ENCODE measurements at regions of chr1 and their contacts with region 1.

Region 1: DNA sequence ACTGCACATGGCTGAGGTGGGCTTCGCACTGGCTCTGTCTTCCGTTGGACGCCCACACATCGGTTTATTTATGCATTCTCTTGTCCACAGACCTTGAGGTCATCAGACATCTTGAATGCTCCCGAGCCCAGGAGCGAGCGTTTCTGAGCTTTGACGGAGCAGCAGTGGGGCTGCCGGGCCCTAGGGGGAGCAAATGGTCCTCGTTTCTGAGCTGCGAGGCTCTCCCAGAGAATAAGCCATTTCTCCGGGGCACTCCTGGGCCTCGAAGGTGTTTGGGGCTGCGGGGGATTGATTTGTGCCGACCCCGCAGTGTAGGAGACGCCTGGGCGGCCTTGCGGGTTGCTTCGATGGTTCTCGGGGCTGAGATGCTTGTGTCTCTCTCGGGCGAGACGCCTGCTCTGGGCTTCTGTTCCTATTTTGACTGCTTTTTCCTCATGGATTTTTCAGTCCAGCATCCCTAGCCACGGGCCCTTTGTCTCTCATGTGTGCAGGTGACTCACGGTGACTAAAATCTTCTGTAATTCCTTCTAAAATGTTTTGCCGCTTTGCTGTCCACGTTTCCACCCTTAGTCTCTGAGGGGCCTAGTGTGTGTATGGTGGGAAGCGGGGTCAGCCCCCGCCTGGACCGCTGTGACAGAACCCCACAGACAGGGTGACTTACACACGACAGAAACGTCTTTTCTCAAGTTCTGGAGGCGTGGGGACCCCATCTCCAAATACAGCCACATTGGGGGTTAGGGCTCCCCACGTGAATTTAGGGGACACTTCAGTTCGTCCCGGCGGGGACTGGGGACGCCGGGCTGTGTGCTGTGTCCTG is 62.1 kb downstream of the FAAP20 start:
- DNase-seq: peak; percentile 26
- ATAC-seq: 0 out of 3 replicates have a peak, but pooled peaks have one; percentile 12
- H3K4me3 ChIP-seq: no peak overlapping the region
- H3K27ac ChIP-seq: peak overlapping the region; percentile 19
- H3K4me1 ChIP-seq: peaks cover 54% of the 10 kb centered on the region
- H3K27me3 ChIP-seq: no peaks in the 10 kb centered on the region
- CTCF ChIP-seq: peak; percentile 70
- EP300 ChIP-seq: no peak
- POLR2A ChIP-seq: no peak
- RAD21 ChIP-seq: peak; percentile 64

Region 2: DNA sequence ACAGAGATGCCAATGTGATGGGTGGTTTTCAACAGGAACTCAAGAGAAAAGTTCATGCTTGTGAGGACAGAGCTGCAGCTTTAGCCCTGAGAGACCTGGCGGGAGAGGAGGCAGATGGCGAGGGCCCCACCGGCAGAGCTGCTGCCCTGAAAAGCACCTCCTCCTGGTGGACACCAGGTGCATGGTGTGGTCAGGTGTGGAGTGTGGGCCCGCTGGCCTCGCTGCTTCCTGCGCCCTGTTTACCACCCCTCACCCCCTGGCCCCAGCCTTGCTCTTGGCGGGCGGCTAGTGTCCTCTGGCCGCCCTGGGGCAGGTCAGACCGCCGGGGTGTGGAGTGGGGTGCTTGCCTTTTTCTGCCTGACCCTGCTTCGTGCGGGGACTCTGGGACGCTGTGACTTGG is 39.4 kb before region 1 on chr1:
- CTCF ChIA-PET with region 1: no interaction called
- POLR2A ChIA-PET with region 1: no interaction called
- in situ Hi-C with region 1: no loop called
- intact Hi-C with region 1: no loop called
- DNase-seq: no peak
- ATAC-seq: 0 out of 3 replicates have a peak, but pooled peaks have one; percentile 15
- H3K4me3 ChIP-seq: no peak overlapping the region
- H3K27ac ChIP-seq: no peak overlapping the region
- H3K4me1 ChIP-seq: peaks cover 13% of the 10 kb centered on the region; the same call in 1 of the 2 replicates
- H3K27me3 ChIP-seq: no peaks in the 10 kb centered on the region
- CTCF ChIP-seq: no peak
- EP300 ChIP-seq: no peak
- POLR2A ChIP-seq: no peak
- RAD21 ChIP-seq: no peak

Region 3: DNA sequence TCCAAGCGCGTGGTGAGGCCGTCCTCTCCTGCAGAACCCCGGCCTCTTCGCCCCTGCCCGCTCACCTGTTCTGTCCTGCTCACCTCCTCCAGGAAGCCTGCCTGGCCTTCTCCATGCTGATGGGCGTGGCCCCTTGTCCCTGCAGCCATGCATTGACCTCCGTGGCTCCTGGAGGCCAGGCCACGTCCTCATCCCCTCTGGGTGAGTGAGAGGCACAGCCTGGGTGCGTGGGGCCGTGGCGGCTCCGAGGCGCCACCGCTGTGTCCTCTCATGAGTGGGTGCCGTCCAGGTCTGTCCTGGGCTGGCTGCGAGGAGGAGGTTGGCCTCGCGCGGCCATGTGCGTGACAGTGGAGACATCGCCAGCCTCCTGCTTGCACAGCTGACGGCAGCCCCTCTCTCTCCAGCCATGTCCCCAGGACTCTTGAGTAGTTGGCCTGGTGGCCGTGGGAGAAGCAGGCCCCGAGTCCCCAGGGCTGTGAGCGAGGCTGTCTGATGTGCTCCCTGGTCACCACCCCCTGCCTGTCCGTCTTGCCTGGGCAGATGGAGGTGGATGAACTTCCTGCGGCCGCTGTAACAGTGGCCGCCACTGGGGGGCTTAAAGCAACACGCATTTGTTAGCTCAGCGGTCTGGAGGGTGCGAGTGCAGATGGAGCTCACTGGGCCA is 24.1 kb before region 1 on chr1:
- CTCF ChIA-PET with region 1: no interaction called
- POLR2A ChIA-PET with region 1: interaction called, 12 read pairs
- in situ Hi-C with region 1: loop called (anchors 5 kb)
- intact Hi-C with region 1: no loop called
- DNase-seq: peak; percentile 40
- ATAC-seq: peak; percentile 17
- H3K4me3 ChIP-seq: no peak overlapping the region
- H3K27ac ChIP-seq: no peak overlapping the region
- H3K4me1 ChIP-seq: peaks cover 26% of the 10 kb centered on the region
- H3K27me3 ChIP-seq: no peaks in the 10 kb centered on the region
- CTCF ChIP-seq: peak; percentile 68
- EP300 ChIP-seq: no peak
- POLR2A ChIP-seq: no peak
- RAD21 ChIP-seq: peak; percentile 68

Region 4: DNA sequence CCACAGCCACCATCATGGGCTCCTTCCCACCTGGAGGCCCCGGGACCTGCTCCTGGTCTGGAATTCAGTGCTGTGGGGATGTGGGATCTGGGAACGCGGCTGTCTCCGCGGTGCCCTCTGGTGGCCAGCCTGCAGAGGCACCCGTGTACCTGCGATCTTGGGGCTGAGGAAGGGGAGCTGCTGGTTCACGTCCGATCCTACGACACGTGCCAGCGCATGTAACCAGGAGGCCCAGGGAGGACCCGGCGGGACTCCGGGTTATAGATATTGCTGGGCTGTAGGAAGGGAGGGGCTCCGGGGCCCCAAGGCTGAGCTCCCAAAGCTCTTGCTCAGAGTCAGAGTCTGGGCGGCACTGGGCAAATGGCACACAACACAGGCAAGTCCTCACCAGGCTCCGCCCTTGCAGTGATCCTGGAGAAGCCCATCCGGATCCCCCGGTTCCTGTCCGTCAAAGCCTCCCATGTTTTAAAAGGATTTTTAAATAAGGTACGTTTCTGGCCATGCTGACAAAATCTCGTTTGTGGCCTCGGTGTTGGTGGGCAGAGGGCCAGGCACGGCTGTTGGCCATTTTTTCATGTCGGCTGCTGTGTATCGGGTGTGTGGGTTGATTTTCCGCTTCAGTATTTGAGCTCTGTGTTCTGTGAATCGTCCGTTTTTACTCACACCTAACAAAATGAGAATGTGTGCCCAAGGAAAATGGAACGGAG is 42.1 kb after region 1 on chr1:
- CTCF ChIA-PET with region 1: no interaction called
- POLR2A ChIA-PET with region 1: no interaction called
- in situ Hi-C with region 1: no loop called
- intact Hi-C with region 1: loop called (anchors 1 kb)
- DNase-seq: peak; percentile 23
- ATAC-seq: peak; percentile 77
- H3K4me3 ChIP-seq: no peak overlapping the region
- H3K27ac ChIP-seq: no peak overlapping the region
- H3K4me1 ChIP-seq: no peaks in the 10 kb centered on the region
- H3K27me3 ChIP-seq: no peaks in the 10 kb centered on the region
- CTCF ChIP-seq: peak; percentile 90
- EP300 ChIP-seq: no peak
- POLR2A ChIP-seq: no peak
- RAD21 ChIP-seq: peak; percentile 55